ENCODE measurements at regions of chr1 and their contacts with region 1.

Region 1: DNA sequence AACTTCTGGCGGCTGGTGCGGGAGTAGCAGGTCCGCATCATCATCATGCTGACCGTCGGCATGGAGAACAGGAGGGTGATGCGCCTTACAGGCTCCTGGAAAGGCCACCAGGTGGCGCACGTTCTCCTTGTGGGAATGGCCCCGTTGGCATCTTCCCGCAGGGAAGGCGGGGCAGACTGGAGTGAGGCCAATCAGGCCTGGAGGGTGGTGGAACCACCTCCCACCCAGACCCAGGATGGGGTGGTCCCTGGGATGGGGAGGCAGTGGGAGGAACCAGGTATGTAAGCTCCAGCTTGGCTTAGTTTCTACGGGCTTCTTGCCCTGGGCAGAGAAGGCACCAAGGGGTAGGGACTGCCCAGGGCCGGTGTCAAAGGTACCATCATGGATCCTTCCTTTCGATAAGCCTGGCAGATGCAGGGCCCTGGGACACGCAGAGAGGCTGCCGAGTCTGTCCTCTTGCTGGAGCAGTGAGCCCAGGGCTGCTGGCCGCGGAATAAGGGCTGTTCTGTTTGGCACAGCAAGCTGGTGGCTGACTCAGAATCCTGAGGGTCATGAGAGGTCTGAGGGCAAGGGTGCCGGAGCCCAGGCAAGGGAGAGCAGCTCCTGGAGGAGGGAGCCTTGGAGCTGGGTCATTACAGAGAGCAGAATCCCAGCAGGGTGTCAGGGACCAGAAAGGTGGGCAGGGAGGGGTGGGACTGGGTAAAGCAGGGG is 8.7 kb upstream of the LGR6 start:
- DNase-seq: peak in 30 of 35 experiments; percentile 18 to 79 (median 51)
- ATAC-seq: peak in 3 of 4 experiments; percentile 52 to 65 (median 56)
- H3K4me3 ChIP-seq: no peak overlapping the region
- H3K4me3 Mint-ChIP-seq: no peak overlapping the region
- H3K27ac ChIP-seq: no peak overlapping the region
- H3K27ac Mint-ChIP-seq: no peak overlapping the region
- H3K4me1 ChIP-seq: peaks cover 0 to 12% of the 10 kb centered on the region in 2 experiments
- H3K4me1 Mint-ChIP-seq: peaks cover 11 to 12% (median 12%) of the 10 kb centered on the region in 3 donors
- H3K27me3 ChIP-seq: peaks cover 0 to 42% of the 10 kb centered on the region in 2 experiments
- H3K27me3 Mint-ChIP-seq: peaks cover 0 to 9% of the 10 kb centered on the region in 2 donors

Region 2: DNA sequence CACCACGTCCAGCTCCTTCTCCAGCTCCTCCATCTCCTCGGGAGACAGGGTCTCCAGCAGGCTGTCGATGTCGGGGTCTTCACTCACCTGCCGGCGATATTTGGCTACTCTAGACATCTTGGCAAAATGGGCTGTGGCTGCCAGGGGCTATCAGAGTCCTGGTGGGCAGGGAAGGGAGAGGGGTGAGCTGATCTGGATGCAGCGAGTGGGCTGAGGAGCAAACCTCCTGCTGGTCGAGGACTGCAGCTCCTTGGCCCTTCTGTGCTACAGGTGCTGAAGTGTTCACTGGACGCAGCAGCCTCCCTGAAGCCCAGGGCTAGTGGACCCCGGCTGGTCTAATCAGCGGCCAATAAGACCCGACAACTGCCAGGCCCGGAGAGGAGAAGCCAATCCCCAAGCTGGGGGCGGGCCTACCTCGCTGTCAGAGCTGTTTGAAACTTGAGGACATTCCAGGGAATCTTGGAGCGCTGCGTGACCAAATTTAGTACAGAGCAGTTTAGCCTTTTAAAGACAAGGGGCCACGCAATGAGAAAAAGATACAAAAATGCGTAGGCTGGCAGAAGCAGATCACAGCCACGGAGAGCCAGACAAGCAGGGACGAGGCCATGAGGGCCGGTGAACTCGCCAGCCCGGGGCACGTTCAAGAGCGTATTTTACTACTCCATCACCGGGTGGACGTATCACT is 238.5 kb before region 1 on chr1 and contains the start of gene LMOD1:
- CTCF ChIA-PET with region 1: no interaction called
- POLR2A ChIA-PET with region 1: no interaction called
- DNase-seq: peak in 1 of 35 experiments; percentile 11
- ATAC-seq: peak in 3 of 4 experiments; percentile 42 to 53 (median 47)
- H3K4me3 ChIP-seq: peak within 1 kb of the TSS in 1 of 2 donors; percentile 7
- H3K4me3 Mint-ChIP-seq: peak within 1 kb of the TSS; percentile 4 to 70 (median 53)
- H3K27ac ChIP-seq: no peak within 1 kb of the TSS
- H3K27ac Mint-ChIP-seq: peak within 1 kb of the TSS in 1 of 2 donors; percentile 55
- H3K4me1 ChIP-seq: peaks cover 0 to 10% of the 10 kb centered on the region in 2 experiments
- H3K4me1 Mint-ChIP-seq: peaks cover 12 to 17% (median 13%) of the 10 kb centered on the region in 3 donors
- H3K27me3 ChIP-seq: peaks cover 13 to 50% of the 10 kb centered on the region in 2 experiments
- H3K27me3 Mint-ChIP-seq: peaks cover 52 to 54% of the 10 kb centered on the region in 2 donors
- total RNA-seq, gene LMOD1: 0.10 to 0.29 (median 0.16) TPM in 3 of 5 donors, not detected in the others

Region 3: GRCh38 chr1:201983380-201983805 is 201.5 kb before region 1 on chr1:
- CTCF ChIA-PET with region 1: no interaction called
- POLR2A ChIA-PET with region 1: no interaction called
- DNase-seq: peak in 1 of 35 experiments; percentile 5
- ATAC-seq: no peak
- H3K4me3 ChIP-seq: peak overlapping the region; percentile 66 to 90
- H3K4me3 Mint-ChIP-seq: peak overlapping the region; percentile 92 to 99 (median 97)
- H3K27ac ChIP-seq: peak overlapping the region; percentile 14
- H3K27ac Mint-ChIP-seq: peak overlapping the region; percentile 91 to 94
- H3K4me1 ChIP-seq: peaks cover 0 to 11% of the 10 kb centered on the region in 2 experiments
- H3K4me1 Mint-ChIP-seq: peaks cover 24 to 33% (median 26%) of the 10 kb centered on the region in 3 donors
- H3K27me3 ChIP-seq: no peaks in the 10 kb centered on the region
- H3K27me3 Mint-ChIP-seq: no peaks in the 10 kb centered on the region

Region 4: GRCh38 chr1:202144402-202145067 is 40.4 kb before region 1 on chr1 and contains the start of gene ARL8A:
- CTCF ChIA-PET with region 1: interaction called in 1 of 2 experiments, 5 read pairs
- POLR2A ChIA-PET with region 1: interaction called in 1 of 2 experiments, 11 read pairs
- DNase-seq: peak in 33 of 35 experiments; percentile 31 to 77 (median 54)
- ATAC-seq: peak; percentile 77 to 89 (median 84)
- H3K4me3 ChIP-seq: peak within 1 kb of the TSS; percentile 79 to 84
- H3K4me3 Mint-ChIP-seq: peak within 1 kb of the TSS; percentile 95 to 98 (median 98)
- H3K27ac ChIP-seq: peak within 1 kb of the TSS; percentile 67
- H3K27ac Mint-ChIP-seq: peak within 1 kb of the TSS; percentile 96 to 98
- H3K4me1 ChIP-seq: peaks cover 2 to 42% of the 10 kb centered on the region in 2 experiments
- H3K4me1 Mint-ChIP-seq: peaks cover 25 to 46% (median 35%) of the 10 kb centered on the region in 3 donors
- H3K27me3 ChIP-seq: no peaks in the 10 kb centered on the region
- H3K27me3 Mint-ChIP-seq: no peaks in the 10 kb centered on the region
- total RNA-seq, gene ARL8A: 37.8 to 70.2 (median 50.9) TPM

Region 5: GRCh38 chr1:202154766-202155477 is 30.0 kb before region 1 on chr1:
- CTCF ChIA-PET with region 1: interaction called, 4 to 11 read pairs
- POLR2A ChIA-PET with region 1: no interaction called
- DNase-seq: peak in 30 of 35 experiments; percentile 32 to 77 (median 48)
- ATAC-seq: peak; percentile 59 to 73 (median 68)
- H3K4me3 ChIP-seq: no peak overlapping the region
- H3K4me3 Mint-ChIP-seq: no peak overlapping the region
- H3K27ac ChIP-seq: peak overlapping the region; percentile 53
- H3K27ac Mint-ChIP-seq: peak overlapping the region; percentile 85 to 89
- H3K4me1 ChIP-seq: peaks cover 20 to 59% of the 10 kb centered on the region in 2 experiments
- H3K4me1 Mint-ChIP-seq: peaks cover 50 to 61% (median 54%) of the 10 kb centered on the region in 3 donors
- H3K27me3 ChIP-seq: no peaks in the 10 kb centered on the region
- H3K27me3 Mint-ChIP-seq: no peaks in the 10 kb centered on the region

Measured in T-cell (primary cell).